CD4-positive, alpha-beta memory T cell (primary cell): ENCODE measurements at regions of chr19 and their contacts with region 1.

Region 1: GRCh38 chr19:39328046-39328705 is 7.5 kb upstream of the LRFN1 start:
- DNase-seq: peak; percentile 67 to 77 (median 73)
- H3K4me3 ChIP-seq: no peak overlapping the region
- H3K4me3 Mint-ChIP-seq: peak overlapping the region in 4 of 8 donors; percentile 32 to 78 (median 58)
- H3K27ac ChIP-seq: peak overlapping the region; percentile 18
- H3K27ac Mint-ChIP-seq: peak overlapping the region; percentile 73 to 92 (median 87)
- H3K4me1 ChIP-seq: peaks cover 64% of the 10 kb centered on the region
- H3K4me1 Mint-ChIP-seq: peaks cover 21 to 51% (median 34%) of the 10 kb centered on the region in 4 donors
- H3K27me3 ChIP-seq: no peaks in the 10 kb centered on the region
- H3K27me3 Mint-ChIP-seq: no peaks in the 10 kb centered on the region

Region 2: DNA sequence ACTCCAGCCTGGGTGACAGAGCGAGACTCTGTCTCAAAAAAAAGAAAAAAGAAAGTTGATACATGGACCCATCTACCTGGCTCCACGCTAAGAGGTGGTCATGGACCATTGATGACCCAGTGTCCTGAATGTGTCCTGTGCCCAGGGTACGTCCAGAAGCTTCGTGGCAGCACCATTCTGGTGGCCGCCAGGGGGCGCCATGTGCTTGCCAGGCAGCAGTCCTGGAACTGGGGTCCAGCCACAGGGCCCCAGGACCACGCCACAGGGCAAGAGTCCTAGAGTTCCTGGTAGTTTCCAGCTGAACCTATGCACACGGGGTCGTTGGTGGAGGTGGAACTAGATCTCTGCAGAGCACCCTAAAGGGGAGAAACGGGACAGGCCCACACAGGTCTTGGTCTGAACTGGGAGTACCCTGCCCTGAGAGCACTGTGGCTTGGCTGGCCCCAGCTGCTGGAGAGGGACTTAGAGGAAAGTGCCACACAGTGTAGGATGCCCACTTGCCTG is 275.9 kb before region 1 on chr19:
- CTCF ChIA-PET with region 1: interaction called, 5 read pairs
- POLR2A ChIA-PET with region 1: no interaction called
- intact Hi-C with region 1: loop called (anchors 5 kb)
- DNase-seq: peak; percentile 58 to 68 (median 62)
- H3K4me3 ChIP-seq: no peak overlapping the region
- H3K4me3 Mint-ChIP-seq: no peak overlapping the region
- H3K27ac ChIP-seq: no peak overlapping the region
- H3K27ac Mint-ChIP-seq: peak overlapping the region in 3 of 7 donors; percentile 29 to 85 (median 77)
- H3K4me1 ChIP-seq: no peaks in the 10 kb centered on the region
- H3K4me1 Mint-ChIP-seq: peaks cover 0 to 3% (median 0%) of the 10 kb centered on the region in 4 donors
- H3K27me3 ChIP-seq: no peaks in the 10 kb centered on the region
- H3K27me3 Mint-ChIP-seq: peaks cover 0 to 2% of the 10 kb centered on the region in 2 donors

Region 3: GRCh38 chr19:39212375-39212742 is 115.8 kb before region 1 on chr19:
- CTCF ChIA-PET with region 1: interaction called, 7 read pairs
- POLR2A ChIA-PET with region 1: interaction called, 4 read pairs
- intact Hi-C with region 1: loop called (anchors 1 kb)
- DNase-seq: peak in 4 of 5 donors; percentile 48 to 50 (median 49)
- H3K4me3 ChIP-seq: no peak overlapping the region
- H3K4me3 Mint-ChIP-seq: no peak overlapping the region
- H3K27ac ChIP-seq: no peak overlapping the region
- H3K27ac Mint-ChIP-seq: no peak overlapping the region
- H3K4me1 ChIP-seq: no peaks in the 10 kb centered on the region
- H3K4me1 Mint-ChIP-seq: no peaks in the 10 kb centered on the region
- H3K27me3 ChIP-seq: no peaks in the 10 kb centered on the region
- H3K27me3 Mint-ChIP-seq: peaks cover 5% of the 10 kb centered on the region in 2 donors

Region 4: GRCh38 chr19:39316627-39317321 is 11.4 kb before region 1 on chr19:
- CTCF ChIA-PET with region 1: interaction called, 10 read pairs
- POLR2A ChIA-PET with region 1: no interaction called
- intact Hi-C with region 1: no loop called
- DNase-seq: no peak
- H3K4me3 ChIP-seq: no peak overlapping the region
- H3K4me3 Mint-ChIP-seq: peak overlapping the region in 1 of 8 donors; percentile 7
- H3K27ac ChIP-seq: no peak overlapping the region
- H3K27ac Mint-ChIP-seq: peak overlapping the region in 4 of 7 donors; percentile 27 to 63 (median 52)
- H3K4me1 ChIP-seq: peaks cover 13% of the 10 kb centered on the region
- H3K4me1 Mint-ChIP-seq: peaks cover 13 to 27% (median 22%) of the 10 kb centered on the region in 4 donors
- H3K27me3 ChIP-seq: no peaks in the 10 kb centered on the region
- H3K27me3 Mint-ChIP-seq: no peaks in the 10 kb centered on the region

Region 5: DNA sequence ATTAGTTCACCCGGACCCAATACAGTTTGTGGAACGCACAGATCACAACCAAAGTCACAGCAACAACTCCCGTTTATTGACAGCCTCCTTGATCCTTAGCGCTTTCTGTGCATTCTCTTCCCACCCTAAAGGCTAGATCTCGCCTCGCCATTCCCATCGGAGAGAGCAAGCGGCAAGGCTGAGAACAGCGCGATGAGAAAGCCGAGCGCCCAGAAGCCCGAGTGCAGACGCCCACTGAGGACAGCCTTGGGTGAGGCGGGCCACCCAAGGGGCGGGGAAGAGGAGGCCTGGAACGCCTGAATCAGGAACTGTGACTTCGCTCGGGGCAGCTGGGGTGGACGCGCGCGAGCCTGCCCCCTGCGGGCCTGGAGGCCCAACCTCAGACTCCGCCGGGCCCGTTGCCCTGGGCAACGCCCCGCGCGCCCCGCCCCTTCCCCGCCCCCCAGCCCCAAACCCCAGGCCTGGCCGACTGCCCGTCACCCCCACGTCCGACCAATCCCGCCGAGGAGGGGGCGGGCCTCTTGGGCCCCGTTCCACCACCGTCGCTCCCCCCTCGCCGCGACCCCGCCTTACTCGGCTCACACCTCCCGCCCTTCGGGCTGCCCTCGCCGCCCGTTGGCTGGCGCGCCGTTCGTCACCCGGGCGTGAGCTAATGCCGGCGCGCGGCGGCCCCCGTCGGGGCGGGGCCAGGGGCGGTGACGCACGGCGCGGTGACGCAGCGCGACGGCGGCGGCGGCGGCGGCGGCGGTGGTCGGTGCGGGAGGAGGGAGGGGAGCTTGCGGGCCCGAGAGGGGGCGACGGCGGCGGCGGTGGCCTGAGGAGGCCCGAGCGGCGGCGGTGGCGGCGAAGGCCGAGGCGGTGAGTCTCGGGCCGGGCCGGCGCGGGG is 13.8 kb after region 1 on chr19 and contains the start of gene SAMD4B:
- CTCF ChIA-PET with region 1: interaction called, 5 read pairs
- POLR2A ChIA-PET with region 1: interaction called, 12 read pairs
- intact Hi-C with region 1: no loop called
- DNase-seq: peak; percentile 99 to 100 (median 99)
- H3K4me3 ChIP-seq: peak within 1 kb of the TSS; percentile 86 to 91
- H3K4me3 Mint-ChIP-seq: peak within 1 kb of the TSS; percentile 87 to 99 (median 94)
- H3K27ac ChIP-seq: peak within 1 kb of the TSS; percentile 78
- H3K27ac Mint-ChIP-seq: peak within 1 kb of the TSS; percentile 91 to 98 (median 95)
- H3K4me1 ChIP-seq: peaks cover 64% of the 10 kb centered on the region
- H3K4me1 Mint-ChIP-seq: peaks cover 50 to 77% (median 64%) of the 10 kb centered on the region in 4 donors
- H3K27me3 ChIP-seq: no peaks in the 10 kb centered on the region
- H3K27me3 Mint-ChIP-seq: no peaks in the 10 kb centered on the region
- total RNA-seq, gene SAMD4B: 65.0 to 79.6 TPM

Region 6: GRCh38 chr19:39532233-39533002 is 204.2 kb after region 1 on chr19 and contains the start of gene EID2B:
- CTCF ChIA-PET with region 1: no interaction called
- POLR2A ChIA-PET with region 1: no interaction called
- intact Hi-C with region 1: loop called (anchors 10 kb)
- DNase-seq: peak; percentile 92 to 95 (median 94)
- H3K4me3 ChIP-seq: peak within 1 kb of the TSS; percentile 19 to 92
- H3K4me3 Mint-ChIP-seq: peak within 1 kb of the TSS; percentile 91 to 96 (median 94)
- H3K27ac ChIP-seq: peak within 1 kb of the TSS; percentile 83
- H3K27ac Mint-ChIP-seq: peak within 1 kb of the TSS; percentile 81 to 95 (median 92)
- H3K4me1 ChIP-seq: peaks cover 20% of the 10 kb centered on the region
- H3K4me1 Mint-ChIP-seq: peaks cover 14 to 43% (median 28%) of the 10 kb centered on the region in 4 donors
- H3K27me3 ChIP-seq: no peaks in the 10 kb centered on the region
- H3K27me3 Mint-ChIP-seq: no peaks in the 10 kb centered on the region
- total RNA-seq, gene EID2B: 7.7 to 8.8 TPM

Region 7: GRCh38 chr19:39617745-39618144 is 289.6 kb after region 1 on chr19:
- CTCF ChIA-PET with region 1: no interaction called
- POLR2A ChIA-PET with region 1: no interaction called
- intact Hi-C with region 1: no loop called
- DNase-seq: no peak
- H3K4me3 ChIP-seq: no peak overlapping the region
- H3K4me3 Mint-ChIP-seq: no peak overlapping the region
- H3K27ac ChIP-seq: no peak overlapping the region
- H3K27ac Mint-ChIP-seq: no peak overlapping the region
- H3K4me1 ChIP-seq: no peaks in the 10 kb centered on the region
- H3K4me1 Mint-ChIP-seq: no peaks in the 10 kb centered on the region
- H3K27me3 ChIP-seq: no peaks in the 10 kb centered on the region
- H3K27me3 Mint-ChIP-seq: peaks cover 29 to 41% of the 10 kb centered on the region in 2 donors